Heart right ventricle (tissue), 16 donors: ENCODE measurements at regions of chr2 and their contacts with region 1.

Region 1: GRCh38 chr2:53970724-53971602 is at the start of gene PSME4:
- DNase-seq: peak; percentile 96 to 97
- ATAC-seq: peak; percentile 93 to 97 (median 94)
- H3K4me3 ChIP-seq: peak within 1 kb of the TSS; percentile 80 to 95 (median 87)
- H3K27ac ChIP-seq: peak within 1 kb of the TSS; percentile 89 to 99 (median 96)
- H3K4me1 ChIP-seq: peaks cover 0 to 49% (median 27%) of the 10 kb centered on the region in 9 donors
- H3K27me3 ChIP-seq: no peaks in the 10 kb centered on the region
- CTCF ChIP-seq: no peak
- total RNA-seq, gene PSME4: 53.1 to 77.8 (median 66.6) TPM

Region 2: GRCh38 chr2:54041135-54041534 is 70.2 kb after region 1 on chr2:
- intact Hi-C with region 1: loop called in 2 of 10 experiments (anchors 5 to 10 kb)
- DNase-seq: no peak
- ATAC-seq: no peak
- H3K4me3 ChIP-seq: no peak overlapping the region
- H3K27ac ChIP-seq: no peak overlapping the region
- H3K4me1 ChIP-seq: peaks cover 0 to 28% (median 9%) of the 10 kb centered on the region in 9 donors
- H3K27me3 ChIP-seq: no peaks in the 10 kb centered on the region
- CTCF ChIP-seq: no peak

Region 3: DNA sequence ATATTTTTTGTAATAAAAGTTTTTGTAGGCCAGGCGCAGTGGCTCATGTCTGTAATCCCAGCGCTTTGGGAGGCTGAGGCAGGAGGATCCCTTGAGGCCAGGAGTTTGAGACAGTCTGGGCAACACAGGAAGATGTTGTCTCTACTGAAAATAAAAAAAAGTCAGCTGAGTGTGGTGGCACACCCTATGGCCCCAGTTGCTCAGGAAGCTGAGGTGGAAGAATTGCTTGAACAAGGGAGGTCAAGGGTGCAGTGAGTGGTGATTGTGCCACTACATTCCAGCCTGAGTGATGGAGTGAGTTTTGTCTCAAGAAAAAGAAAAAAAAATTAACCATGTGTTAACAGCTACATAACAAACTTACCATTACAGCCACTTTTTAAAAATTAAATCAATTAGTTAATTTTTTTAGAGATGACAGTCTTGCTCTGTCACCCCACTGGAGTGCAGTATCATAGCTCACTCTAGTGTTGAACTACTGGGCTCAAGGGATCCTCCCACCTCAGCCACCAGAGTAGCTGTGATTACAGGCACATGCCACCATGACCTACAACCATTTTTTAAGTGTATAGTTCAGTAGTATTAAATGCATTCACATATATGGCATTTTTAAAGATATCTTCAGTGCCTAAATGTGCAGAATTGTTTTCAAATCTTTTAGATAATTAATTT is 77.3 kb after region 1 on chr2:
- intact Hi-C with region 1: loop called in 2 of 10 experiments (anchors 5 to 10 kb)
- DNase-seq: no peak
- ATAC-seq: peak in 1 of 8 donors; percentile 46
- H3K4me3 ChIP-seq: no peak overlapping the region
- H3K27ac ChIP-seq: no peak overlapping the region
- H3K4me1 ChIP-seq: peaks cover 0 to 18% (median 6%) of the 10 kb centered on the region in 9 donors
- H3K27me3 ChIP-seq: no peaks in the 10 kb centered on the region
- CTCF ChIP-seq: peak in 2 of 9 donors; percentile 18 to 31

Region 4: DNA sequence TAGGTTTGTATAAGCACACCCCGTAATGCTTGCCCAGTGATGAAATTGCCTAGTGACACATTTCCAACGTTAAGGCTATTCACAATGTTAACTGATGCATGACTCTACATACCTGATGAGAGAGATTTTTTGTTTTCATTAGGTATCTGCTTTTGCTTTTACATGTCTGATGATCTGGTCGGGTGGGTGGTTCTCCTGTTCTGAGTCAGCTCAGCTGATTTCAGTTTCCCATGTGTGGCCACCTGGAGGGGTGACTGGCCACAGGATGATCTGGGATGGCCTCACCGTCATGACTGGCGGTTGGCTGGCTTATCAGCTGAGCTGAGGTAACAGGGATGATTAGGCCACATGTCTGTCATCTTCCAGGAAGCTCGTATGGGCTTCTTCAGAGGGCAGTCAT is 110.6 kb after region 1 on chr2:
- intact Hi-C with region 1: loop called in 2 of 10 experiments (anchors 10 kb)
- DNase-seq: no peak
- ATAC-seq: no peak
- H3K4me3 ChIP-seq: no peak overlapping the region
- H3K27ac ChIP-seq: no peak overlapping the region
- H3K4me1 ChIP-seq: peaks cover 0 to 6% (median under 1%) of the 10 kb centered on the region in 9 donors
- H3K27me3 ChIP-seq: no peaks in the 10 kb centered on the region
- CTCF ChIP-seq: no peak

Region 5: DNA sequence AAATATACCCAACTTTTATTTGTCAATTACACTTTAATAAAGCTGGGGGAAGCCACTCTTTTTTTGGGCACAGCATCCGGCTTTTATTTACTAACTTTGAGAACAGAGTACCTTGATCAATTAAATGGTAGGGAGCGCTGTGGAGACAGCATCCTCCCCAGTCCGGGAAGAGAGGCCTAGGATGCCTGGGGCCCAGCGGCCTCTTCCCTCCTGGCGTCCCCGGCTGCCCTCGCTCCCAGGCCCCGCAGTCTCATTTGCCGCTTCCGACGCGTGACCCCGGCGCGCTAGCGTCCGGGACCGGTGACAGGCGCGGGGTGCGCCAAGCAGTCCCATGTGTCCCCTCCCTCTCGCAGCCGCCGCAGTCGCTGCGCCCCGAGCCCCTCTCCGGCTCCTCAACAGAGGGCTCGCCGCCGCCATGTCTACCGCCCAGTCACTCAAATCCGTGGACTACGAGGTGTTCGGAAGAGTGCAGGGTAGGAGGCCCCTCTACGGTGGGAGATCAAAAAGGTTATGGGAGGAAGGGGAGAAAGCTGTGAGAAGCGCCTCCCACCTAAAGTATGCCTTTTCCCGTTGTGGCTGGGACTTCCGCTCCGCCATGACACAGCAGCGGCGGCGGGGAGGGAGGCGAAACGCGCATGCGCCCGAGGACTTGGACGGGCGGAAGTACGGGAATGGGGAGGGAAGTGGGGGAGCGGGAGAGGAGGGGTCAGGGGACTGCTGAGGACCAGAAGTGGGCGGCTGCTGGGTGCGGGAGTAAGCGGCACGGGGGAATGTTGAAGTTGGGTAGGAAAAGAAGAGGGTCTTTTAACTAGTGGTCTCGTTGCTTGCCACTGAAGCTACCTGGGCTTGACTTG is 144.5 kb after region 1 on chr2 and contains the start of gene ACYP2:
- intact Hi-C with region 1: loop called in 2 of 10 experiments (anchors 5 to 10 kb)
- DNase-seq: peak; percentile 97 to 98
- ATAC-seq: peak; percentile 97 to 99 (median 99)
- H3K4me3 ChIP-seq: peak within 1 kb of the TSS; percentile 49 to 87 (median 64)
- H3K27ac ChIP-seq: peak within 1 kb of the TSS; percentile 94 to 100 (median 98)
- H3K4me1 ChIP-seq: peaks cover 0 to 14% (median 8%) of the 10 kb centered on the region in 9 donors
- H3K27me3 ChIP-seq: no peaks in the 10 kb centered on the region
- CTCF ChIP-seq: peak in 6 of 9 donors; percentile 10 to 54 (median 38)
- total RNA-seq, gene ACYP2: 48.6 to 87.1 (median 78.1) TPM